Heart right ventricle (tissue), 16 donors: ENCODE measurements at regions of chr1 and their contacts with region 1.

Region 1: DNA sequence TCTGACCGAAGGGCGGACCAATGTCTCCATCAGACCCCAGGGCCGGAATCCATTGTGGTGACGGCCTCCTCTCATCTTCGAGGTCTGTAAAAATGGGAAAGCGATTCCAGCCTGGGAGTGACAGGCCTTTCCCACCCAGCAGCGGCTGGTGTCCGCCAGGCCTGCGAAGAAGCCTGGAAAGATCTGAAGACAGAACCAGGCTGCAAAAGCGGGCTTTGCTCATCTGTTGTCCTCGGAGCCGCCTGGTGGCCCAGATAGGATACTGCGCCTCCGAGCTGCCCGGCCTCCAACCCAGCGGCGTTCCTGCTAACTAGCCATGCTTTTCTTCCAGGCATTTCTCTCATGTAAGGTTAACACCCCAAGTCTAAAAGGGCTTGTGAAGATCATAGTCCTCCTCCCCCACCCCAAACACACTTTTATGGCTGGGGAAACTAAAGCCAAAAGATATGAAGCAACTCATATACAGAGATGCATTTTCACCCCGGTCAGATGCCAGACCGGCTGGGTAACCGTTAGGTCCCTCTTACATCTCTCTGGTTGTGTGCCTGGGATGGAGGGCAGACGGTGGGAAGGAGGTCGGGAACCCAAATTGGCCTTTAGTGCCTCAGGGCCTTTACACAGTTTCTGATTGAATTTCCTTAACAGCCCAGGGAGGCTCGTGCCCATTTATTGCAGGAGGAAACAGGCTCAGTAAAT is 1.9 kb upstream of the DHRS3 start:
- DNase-seq: peak; percentile 87 to 90
- ATAC-seq: peak; percentile 48 to 75 (median 61)
- H3K4me3 ChIP-seq: peak overlapping the region in 9 of 10 donors; percentile 55 to 91 (median 80)
- H3K27ac ChIP-seq: peak overlapping the region; percentile 92 to 98 (median 96)
- H3K4me1 ChIP-seq: peaks cover 9 to 65% (median 58%) of the 10 kb centered on the region in 9 donors
- H3K27me3 ChIP-seq: peaks cover 0 to 9% (median 0%) of the 10 kb centered on the region in 7 donors
- CTCF ChIP-seq: peak; percentile 94 to 97 (median 96)

Region 2: DNA sequence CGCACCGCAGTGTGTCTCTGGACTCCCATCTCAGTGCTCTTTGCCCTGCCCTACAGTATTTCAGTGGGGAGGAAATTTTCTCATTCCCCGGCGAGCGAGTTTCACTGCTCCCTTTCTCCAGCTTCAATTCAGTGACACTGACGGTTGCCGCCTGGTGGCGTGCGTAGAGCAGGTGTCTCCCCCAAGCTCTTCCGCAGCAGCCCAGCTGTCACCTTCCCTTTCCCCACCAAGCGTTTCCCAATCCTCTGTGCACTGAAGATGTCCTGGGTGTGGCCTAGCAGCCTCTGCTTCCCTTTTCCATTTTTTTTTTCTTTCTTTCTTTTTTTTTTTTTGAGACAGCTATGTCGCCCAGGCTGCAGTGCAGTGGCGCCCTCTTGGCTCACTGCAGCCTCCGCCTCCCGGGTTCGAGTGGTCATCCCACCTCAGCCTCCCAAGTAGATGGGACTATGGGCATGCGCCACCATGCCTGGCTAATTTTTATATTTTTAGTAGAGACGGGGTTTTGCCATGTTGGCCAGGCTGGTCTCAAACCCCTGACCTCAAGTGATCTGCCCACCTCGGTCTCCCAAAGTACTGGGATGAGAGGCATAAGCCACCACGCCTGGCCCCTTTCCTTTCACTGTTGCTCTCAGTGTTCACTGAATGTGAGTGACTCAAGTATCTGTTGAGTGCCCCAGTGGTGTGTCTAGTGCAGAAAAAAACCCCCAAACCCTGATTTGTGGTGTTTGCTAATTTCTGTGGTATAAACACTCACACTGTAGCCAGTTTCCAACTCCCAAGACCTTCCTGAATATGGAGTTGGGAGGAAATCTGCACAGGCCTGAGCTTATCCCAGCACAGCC is 423.1 kb before region 1 on chr1:
- intact Hi-C with region 1: no loop called
- DNase-seq: peak in 1 of 2 donors; percentile 39
- ATAC-seq: peak in 7 of 8 donors; percentile 45 to 65 (median 63)
- H3K4me3 ChIP-seq: no peak overlapping the region
- H3K27ac ChIP-seq: peak overlapping the region in 2 of 10 donors; percentile 6 to 76
- H3K4me1 ChIP-seq: peaks cover 0 to 41% (median 0%) of the 10 kb centered on the region in 9 donors
- H3K27me3 ChIP-seq: no peaks in the 10 kb centered on the region
- CTCF ChIP-seq: peak in 3 of 9 donors; percentile 9 to 44 (median 14)

Region 3: GRCh38 chr1:12314333-12314903 is 305.5 kb before region 1 on chr1:
- intact Hi-C with region 1: loop called in 8 of 10 experiments (anchors 2 to 10 kb)
- DNase-seq: no peak
- ATAC-seq: peak in 5 of 8 donors; percentile 27 to 69 (median 63)
- H3K4me3 ChIP-seq: no peak overlapping the region
- H3K27ac ChIP-seq: peak overlapping the region in 4 of 10 donors; percentile 23 to 49 (median 32)
- H3K4me1 ChIP-seq: peaks cover 2 to 35% (median 11%) of the 10 kb centered on the region in 9 donors
- H3K27me3 ChIP-seq: no peaks in the 10 kb centered on the region
- CTCF ChIP-seq: peak; percentile 24 to 74 (median 57)

Region 4: DNA sequence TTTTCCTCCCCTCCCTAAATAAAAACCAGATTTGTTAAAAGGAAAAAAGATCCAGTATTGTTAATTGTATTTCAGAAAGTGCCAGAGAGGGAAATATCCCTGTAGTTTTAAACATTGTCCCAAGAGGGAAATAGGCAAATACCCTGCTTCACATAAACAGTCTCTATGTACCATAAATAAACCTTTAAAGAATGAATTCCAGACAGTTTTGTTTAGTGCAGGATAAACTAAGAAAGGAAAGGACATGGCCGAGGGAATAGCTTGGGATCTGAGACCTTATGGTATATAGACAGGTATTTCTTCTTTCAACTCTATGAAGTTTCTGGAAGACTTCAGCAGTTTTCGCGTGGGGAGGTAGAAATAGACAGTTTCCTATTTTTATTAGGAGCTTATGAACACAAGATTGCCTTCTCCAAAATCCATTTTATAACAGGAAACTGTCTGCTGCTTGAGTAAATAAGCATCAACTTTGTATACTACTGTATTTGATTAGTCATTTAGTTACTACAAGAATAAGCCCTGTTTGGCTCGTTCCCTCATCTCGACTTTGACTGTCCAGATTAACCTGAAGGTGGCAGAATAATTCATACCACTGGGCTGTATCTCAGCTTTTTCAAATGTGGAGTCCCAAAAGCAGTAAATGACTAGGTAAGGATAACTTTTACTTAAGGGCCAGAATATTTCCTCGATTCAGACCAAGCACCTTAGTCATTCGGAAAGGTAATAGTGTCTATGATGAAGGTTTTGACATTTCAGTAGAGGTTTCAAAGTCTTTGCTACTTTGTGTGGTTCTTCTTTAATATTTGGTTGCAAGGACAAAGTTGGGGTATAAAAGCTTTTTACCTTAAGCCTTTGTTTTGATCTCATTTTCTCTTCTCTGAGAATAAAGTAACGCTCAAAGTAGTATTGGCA is 212.6 kb before region 1 on chr1:
- intact Hi-C with region 1: loop called (anchors 1 to 10 kb)
- DNase-seq: peak in 1 of 2 donors; percentile 25
- ATAC-seq: peak; percentile 44 to 82 (median 76)
- H3K4me3 ChIP-seq: no peak overlapping the region
- H3K27ac ChIP-seq: peak overlapping the region in 9 of 10 donors; percentile 7 to 78 (median 67)
- H3K4me1 ChIP-seq: peaks cover 16 to 54% (median 43%) of the 10 kb centered on the region in 9 donors
- H3K27me3 ChIP-seq: no peaks in the 10 kb centered on the region
- CTCF ChIP-seq: peak in 8 of 9 donors; percentile 5 to 69 (median 57)

Region 5: DNA sequence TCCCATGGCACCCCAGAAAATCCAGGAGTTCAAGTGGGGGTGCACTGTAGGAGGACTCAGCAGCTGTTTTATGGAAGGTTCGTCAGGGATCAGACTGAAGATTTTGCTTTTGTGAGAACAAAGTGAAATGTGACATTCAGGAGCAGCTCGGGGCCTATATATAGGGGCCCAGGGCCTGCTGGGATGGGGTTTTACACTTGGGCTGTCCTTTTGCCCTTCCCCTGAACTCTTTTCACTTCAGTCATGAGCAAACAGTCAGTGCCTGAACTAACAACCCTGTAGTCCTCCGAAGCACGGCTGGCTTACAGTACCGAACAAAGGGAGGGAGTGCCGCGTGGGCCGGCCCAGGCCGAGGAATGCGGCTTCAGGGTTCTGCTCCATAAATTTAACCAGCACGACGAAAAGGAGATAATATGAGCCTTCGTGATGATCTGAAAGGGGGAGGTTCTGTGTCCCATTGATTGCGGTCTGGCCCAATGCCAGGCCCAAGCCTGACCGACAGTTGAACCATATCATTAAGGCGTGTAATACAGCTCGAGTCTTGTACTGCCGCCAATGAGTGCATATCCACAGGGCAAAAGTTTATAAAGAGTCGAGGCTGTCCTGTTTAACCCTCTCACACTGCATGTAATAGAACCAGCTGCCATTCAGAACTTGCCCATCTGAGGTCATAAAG is 141.9 kb before region 1 on chr1:
- intact Hi-C with region 1: loop called in 5 of 10 experiments (anchors 2 to 10 kb)
- DNase-seq: peak; percentile 72 to 75
- ATAC-seq: peak; percentile 69 to 82 (median 79)
- H3K4me3 ChIP-seq: no peak overlapping the region
- H3K27ac ChIP-seq: peak overlapping the region; percentile 52 to 91 (median 78)
- H3K4me1 ChIP-seq: peaks cover 31 to 92% (median 85%) of the 10 kb centered on the region in 9 donors
- H3K27me3 ChIP-seq: no peaks in the 10 kb centered on the region
- CTCF ChIP-seq: no peak

Region 6: GRCh38 chr1:12549460-12550349 is 70.2 kb before region 1 on chr1:
- intact Hi-C with region 1: loop called in 3 of 10 experiments (anchors 5 kb)
- DNase-seq: peak; percentile 62
- ATAC-seq: peak in 7 of 8 donors; percentile 9 to 49 (median 30)
- H3K4me3 ChIP-seq: no peak overlapping the region
- H3K27ac ChIP-seq: peak overlapping the region in 9 of 10 donors; percentile 58 to 82 (median 69)
- H3K4me1 ChIP-seq: peaks cover 25 to 78% (median 58%) of the 10 kb centered on the region in 9 donors
- H3K27me3 ChIP-seq: no peaks in the 10 kb centered on the region
- CTCF ChIP-seq: no peak

Region 7: DNA sequence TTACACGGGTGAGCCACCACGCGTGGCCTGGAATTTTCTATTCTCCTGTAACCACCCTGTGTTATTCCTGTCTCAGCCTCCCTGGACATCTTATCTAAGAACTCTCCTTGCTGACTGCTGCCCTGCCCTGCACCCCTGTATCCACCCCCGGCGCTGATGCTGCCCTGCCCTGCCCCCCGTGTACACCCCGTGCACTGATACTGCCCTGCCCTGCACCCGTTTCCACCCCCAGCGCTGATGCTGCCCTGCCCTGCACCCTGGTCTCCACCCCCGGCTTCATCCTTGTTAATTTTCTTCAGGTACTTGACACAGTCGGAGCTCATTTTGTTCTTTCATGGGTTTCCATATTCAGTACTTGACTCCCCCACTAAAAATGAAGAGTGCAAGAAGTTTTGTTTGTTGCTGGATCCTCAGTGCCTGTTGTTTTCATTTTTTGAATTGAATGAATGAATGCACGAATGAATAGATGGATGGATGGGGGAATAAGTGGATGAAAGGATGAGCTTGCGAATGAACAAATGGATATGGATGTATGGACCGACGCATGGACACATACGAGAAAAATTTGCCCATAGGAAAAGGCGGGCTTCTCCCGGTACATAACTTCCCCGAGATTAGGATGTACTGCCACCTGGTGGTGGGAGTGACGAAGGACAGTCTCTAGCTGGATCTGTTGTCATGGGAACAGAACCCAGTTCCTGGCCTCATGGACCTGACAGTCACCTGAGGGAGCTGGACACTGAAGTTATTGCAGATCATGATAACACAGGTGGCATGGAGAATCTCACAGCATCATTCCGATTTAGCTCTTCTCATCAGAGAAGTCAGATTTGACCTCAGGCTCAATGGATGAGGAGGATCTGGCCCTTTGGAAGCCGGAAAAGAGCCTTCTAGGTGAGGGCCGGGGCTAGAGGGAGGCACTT is 38.9 kb after region 1 on chr1:
- intact Hi-C with region 1: loop called in 2 of 10 experiments (anchors 5 kb)
- DNase-seq: peak; percentile 56 to 68
- ATAC-seq: peak; percentile 71 to 91 (median 86)
- H3K4me3 ChIP-seq: no peak overlapping the region
- H3K27ac ChIP-seq: no peak overlapping the region
- H3K4me1 ChIP-seq: peaks cover 0 to 7% (median 3%) of the 10 kb centered on the region in 9 donors
- H3K27me3 ChIP-seq: no peaks in the 10 kb centered on the region
- CTCF ChIP-seq: peak; percentile 94 to 98 (median 96)

Region 8: DNA sequence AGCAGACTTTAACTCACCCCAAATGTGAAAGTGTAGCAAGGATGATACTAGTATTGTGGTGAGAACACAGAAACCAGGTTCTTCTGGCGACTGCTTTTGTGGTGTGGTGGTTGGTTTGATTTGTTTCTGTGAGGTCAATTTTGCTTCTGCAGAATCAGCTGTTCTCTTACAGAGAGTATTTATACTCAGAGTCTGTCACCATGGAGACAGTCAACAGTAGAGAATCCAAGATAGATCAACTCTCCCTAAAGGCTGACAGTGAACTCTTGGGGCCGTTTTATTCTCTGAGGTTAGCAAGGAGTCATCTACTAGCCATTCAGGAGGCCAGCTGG is 126.0 kb after region 1 on chr1 and contains the start of gene CFAP107:
- intact Hi-C with region 1: no loop called
- DNase-seq: no peak
- ATAC-seq: no peak
- H3K4me3 ChIP-seq: no peak within 1 kb of the TSS
- H3K27ac ChIP-seq: no peak within 1 kb of the TSS
- H3K4me1 ChIP-seq: no peaks in the 10 kb centered on the region
- H3K27me3 ChIP-seq: peaks cover 0 to 41% (median 10%) of the 10 kb centered on the region in 7 donors
- CTCF ChIP-seq: no peak
- total RNA-seq, gene CFAP107: not detected

Region 9: DNA sequence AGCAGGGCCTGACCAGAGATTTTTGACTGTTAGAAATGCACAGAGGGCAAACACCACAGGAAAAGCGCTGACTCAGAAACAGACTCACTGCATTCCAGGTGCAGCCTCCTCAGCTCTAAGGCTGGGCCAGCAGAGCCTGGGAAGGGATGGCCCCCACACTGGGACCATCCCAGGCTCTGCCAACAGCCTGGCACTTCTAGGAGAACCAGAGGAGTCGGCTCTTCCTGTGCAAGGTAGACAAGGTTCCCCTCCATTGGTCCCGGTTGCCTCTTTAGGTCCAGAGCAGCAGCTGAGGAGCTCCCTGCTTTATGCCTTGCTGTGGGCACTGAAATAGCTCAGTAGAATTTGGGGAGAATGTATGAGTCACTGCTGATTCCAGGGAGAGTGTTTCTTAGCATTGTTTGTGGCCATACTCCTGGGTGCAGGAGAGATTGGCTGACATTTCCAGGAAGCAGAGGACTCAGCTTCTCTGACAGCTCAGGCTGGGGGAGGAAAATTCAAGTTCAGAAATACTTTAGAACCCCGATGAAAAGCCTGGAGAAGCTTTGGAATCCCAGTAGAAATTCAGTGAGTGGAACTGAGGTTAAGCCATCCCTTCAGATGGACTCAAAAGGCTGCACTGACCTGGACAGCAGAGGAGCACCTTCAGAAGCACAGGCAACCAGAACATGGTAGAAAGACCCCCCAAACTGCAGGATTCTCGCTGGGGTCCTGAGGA is 190.9 kb after region 1 on chr1:
- intact Hi-C with region 1: no loop called
- DNase-seq: no peak
- ATAC-seq: no peak
- H3K4me3 ChIP-seq: no peak overlapping the region
- H3K27ac ChIP-seq: no peak overlapping the region
- H3K4me1 ChIP-seq: no peaks in the 10 kb centered on the region
- H3K27me3 ChIP-seq: peaks cover 0 to 18% (median 3%) of the 10 kb centered on the region in 7 donors
- CTCF ChIP-seq: no peak